ENCODE measurements at regions of chr19 and their contacts with region 1.

Region 1: DNA sequence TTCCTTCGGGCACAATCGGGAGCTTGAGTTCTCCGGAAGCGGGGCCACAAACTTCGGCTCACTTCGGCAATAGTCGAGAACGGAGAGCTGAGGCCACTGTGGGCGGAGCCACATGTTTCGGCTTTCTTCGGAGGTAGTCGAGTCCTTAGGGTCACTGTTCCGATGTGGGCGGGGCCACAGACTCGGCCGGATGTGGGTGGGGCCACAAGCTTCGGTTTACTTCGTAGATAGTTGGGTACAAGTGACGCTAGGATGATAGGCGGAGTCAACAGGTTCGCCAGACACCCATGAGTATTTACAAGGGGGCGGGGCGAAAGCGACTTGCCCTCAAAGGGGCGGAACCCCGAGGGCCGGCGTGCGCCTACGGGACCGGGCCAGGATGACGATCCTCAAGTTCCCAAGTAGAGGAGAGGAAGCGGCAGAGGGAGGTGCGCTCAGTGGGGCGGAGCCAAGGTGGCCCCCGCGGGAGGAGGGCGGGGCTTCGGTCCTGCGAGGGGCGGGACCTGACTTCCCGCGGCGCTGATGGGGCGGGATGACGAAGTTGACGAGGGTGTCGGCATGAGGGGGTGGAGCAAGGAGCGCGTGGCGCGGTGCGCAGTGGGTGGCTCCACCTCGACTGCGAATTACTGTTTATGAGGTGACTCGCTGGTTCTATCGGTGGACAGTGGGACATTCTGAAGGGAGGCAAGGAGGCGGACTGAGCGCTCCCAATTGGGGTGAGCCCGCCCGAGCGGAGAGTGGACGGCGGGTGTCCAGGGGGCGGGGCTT is 539 bp upstream of the MBOAT7 start:
- DNase-seq: peak; percentile 100
- ATAC-seq: peak; percentile 51
- H3K4me3 ChIP-seq: peak overlapping the region; percentile 31 to 87 (median 81)
- H3K4me3 Mint-ChIP-seq: peak overlapping the region; percentile 94
- H3K27ac ChIP-seq: peak overlapping the region; percentile 96 to 99
- H3K27ac Mint-ChIP-seq: peak overlapping the region; percentile 99
- H3K4me1 ChIP-seq: peaks cover 18 to 22% of the 10 kb centered on the region in 2 donors
- H3K4me1 Mint-ChIP-seq: peaks cover 32% of the 10 kb centered on the region
- H3K27me3 ChIP-seq: no peaks in the 10 kb centered on the region
- H3K27me3 Mint-ChIP-seq: no peaks in the 10 kb centered on the region
- CTCF ChIP-seq: no peak

Region 2: GRCh38 chr19:54102421-54103169 is 87.3 kb before region 1 on chr19 and contains the start of gene NDUFA3:
- CTCF ChIA-PET with region 1: no interaction called
- POLR2A ChIA-PET with region 1: no interaction called
- intact Hi-C with region 1: loop called (anchors 1 kb)
- DNase-seq: peak; percentile 99
- ATAC-seq: peak; percentile 99
- H3K4me3 ChIP-seq: peak within 1 kb of the TSS; percentile 59 to 90 (median 76)
- H3K4me3 Mint-ChIP-seq: peak within 1 kb of the TSS; percentile 100
- H3K27ac ChIP-seq: peak within 1 kb of the TSS; percentile 59 to 74
- H3K27ac Mint-ChIP-seq: peak within 1 kb of the TSS; percentile 89
- H3K4me1 ChIP-seq: peaks cover 6 to 13% of the 10 kb centered on the region in 2 donors
- H3K4me1 Mint-ChIP-seq: peaks cover 20% of the 10 kb centered on the region
- H3K27me3 ChIP-seq: no peaks in the 10 kb centered on the region
- H3K27me3 Mint-ChIP-seq: no peaks in the 10 kb centered on the region
- CTCF ChIP-seq: no peak
- total RNA-seq, gene NDUFA3: 91.8 and 94.4 TPM in 2 replicates

Region 3: DNA sequence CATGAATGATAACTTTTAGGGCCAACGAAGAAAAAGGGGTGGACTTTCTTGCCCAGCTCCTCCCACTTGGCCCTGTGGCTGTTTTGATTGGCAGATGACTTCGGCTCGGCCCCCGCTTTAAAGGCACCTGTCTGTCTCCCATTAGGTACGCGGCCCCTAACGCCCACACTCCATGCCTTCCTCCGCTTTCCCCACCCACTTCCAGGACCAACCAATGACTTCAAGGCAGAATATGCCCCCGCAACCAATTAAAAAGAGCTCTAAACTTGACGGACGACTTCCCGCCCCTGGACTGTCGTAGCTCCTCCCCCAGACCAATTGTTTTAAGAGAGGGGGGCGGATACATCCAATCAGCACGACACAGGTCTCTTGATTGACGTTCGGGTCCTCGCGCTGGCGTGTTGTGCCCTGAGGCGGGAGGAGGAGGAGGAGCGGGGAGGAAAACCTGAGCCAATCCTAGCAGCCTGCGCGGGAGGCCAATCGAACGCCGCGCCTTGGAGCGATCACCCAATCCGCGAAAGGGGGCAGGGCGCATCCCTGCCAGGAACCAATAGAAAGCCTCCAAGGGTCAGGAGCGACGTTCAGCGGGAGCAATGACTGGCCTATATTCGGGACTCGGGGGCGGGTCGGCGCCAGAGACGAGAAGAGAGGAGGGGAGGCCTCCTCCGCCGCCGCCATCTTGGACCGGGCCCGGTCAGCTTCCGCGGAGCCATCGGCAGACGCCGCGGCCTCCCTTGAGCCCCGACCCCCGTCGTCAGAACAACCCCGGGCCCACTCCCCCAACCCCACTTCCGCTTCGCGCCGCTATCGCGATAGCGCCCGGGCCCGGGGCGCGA is 52.6 kb before region 1 on chr19 and contains the start of gene CNOT3:
- CTCF ChIA-PET with region 1: no interaction called
- POLR2A ChIA-PET with region 1: interaction called, 23 read pairs
- intact Hi-C with region 1: loop called (anchors 1 kb)
- DNase-seq: peak; percentile 100
- ATAC-seq: peak; percentile 77
- H3K4me3 ChIP-seq: peak within 1 kb of the TSS; percentile 28 to 94 (median 79)
- H3K4me3 Mint-ChIP-seq: peak within 1 kb of the TSS; percentile 89
- H3K27ac ChIP-seq: peak within 1 kb of the TSS; percentile 74 to 96
- H3K27ac Mint-ChIP-seq: peak within 1 kb of the TSS; percentile 90
- H3K4me1 ChIP-seq: peaks cover 24 to 32% of the 10 kb centered on the region in 2 donors
- H3K4me1 Mint-ChIP-seq: peaks cover 49% of the 10 kb centered on the region
- H3K27me3 ChIP-seq: peaks cover 0 to 13% (median 2%) of the 10 kb centered on the region in 4 experiments
- H3K27me3 Mint-ChIP-seq: peaks cover 4% of the 10 kb centered on the region
- CTCF ChIP-seq: no peak
- total RNA-seq, gene CNOT3: 71.0 and 82.1 TPM in 2 replicates

Region 4: DNA sequence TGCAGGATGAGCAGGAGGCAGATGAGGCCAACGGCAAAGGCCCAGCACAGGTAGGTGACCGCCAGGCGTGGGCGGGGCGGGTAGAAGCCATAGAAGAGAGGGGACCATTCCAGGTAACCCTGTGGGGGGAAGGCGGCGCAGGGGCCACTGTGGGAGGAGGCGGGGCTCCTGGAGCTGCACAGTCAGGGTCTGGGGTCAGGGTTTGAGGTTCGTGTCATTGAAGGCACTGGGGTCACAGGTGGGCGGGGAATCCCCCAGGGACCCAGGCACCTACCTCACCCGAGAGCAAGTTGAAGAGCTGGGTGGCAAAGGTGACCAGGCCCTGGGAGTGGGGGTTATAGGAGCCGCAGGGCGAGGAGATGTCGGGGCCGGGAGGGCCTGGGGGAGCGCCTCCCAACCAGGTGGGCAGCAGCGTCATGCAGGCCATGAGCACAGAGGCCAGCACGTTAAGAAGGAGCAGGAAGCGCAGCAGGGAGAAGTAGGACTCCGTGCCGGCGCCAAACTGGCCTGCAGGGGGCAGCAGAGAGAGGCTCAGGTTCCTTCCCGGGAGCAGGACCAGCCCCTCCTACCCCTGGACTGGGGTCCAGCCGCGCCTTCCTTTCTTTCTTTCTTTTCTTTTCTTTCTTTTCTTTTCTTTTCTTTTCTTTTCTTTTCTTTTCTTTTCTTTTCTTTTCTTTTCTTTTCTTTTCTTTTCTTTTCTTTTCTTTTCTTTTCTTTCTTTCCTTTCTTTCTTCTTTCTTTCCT is 21.6 kb before region 1 on chr19:
- CTCF ChIA-PET with region 1: interaction called, 50 read pairs
- POLR2A ChIA-PET with region 1: interaction called, 8 read pairs
- intact Hi-C with region 1: loop called (anchors 1 kb)
- DNase-seq: peak; percentile 89
- ATAC-seq: peak; percentile 89
- H3K4me3 ChIP-seq: no peak overlapping the region
- H3K4me3 Mint-ChIP-seq: no peak overlapping the region
- H3K27ac ChIP-seq: no peak overlapping the region
- H3K27ac Mint-ChIP-seq: no peak overlapping the region
- H3K4me1 ChIP-seq: peaks cover 18 to 22% of the 10 kb centered on the region in 2 donors
- H3K4me1 Mint-ChIP-seq: peaks cover 24% of the 10 kb centered on the region
- H3K27me3 ChIP-seq: peaks cover 0 to 23% (median 13%) of the 10 kb centered on the region in 4 experiments
- H3K27me3 Mint-ChIP-seq: peaks cover 16% of the 10 kb centered on the region
- CTCF ChIP-seq: peak; percentile 89

Region 5: GRCh38 chr19:54231077-54231931 is 41.4 kb after region 1 on chr19:
- CTCF ChIA-PET with region 1: interaction called, 5 read pairs
- POLR2A ChIA-PET with region 1: no interaction called
- intact Hi-C with region 1: loop called (anchors 5 kb)
- DNase-seq: peak; percentile 88
- ATAC-seq: peak; percentile 87
- H3K4me3 ChIP-seq: no peak overlapping the region
- H3K4me3 Mint-ChIP-seq: no peak overlapping the region
- H3K27ac ChIP-seq: no peak overlapping the region
- H3K27ac Mint-ChIP-seq: no peak overlapping the region
- H3K4me1 ChIP-seq: peaks cover 4 to 7% of the 10 kb centered on the region in 2 donors
- H3K4me1 Mint-ChIP-seq: peaks cover 3% of the 10 kb centered on the region
- H3K27me3 ChIP-seq: peaks cover 0 to 64% (median 16%) of the 10 kb centered on the region in 4 experiments
- H3K27me3 Mint-ChIP-seq: peaks cover 40% of the 10 kb centered on the region
- CTCF ChIP-seq: peak; percentile 91

Region 6: DNA sequence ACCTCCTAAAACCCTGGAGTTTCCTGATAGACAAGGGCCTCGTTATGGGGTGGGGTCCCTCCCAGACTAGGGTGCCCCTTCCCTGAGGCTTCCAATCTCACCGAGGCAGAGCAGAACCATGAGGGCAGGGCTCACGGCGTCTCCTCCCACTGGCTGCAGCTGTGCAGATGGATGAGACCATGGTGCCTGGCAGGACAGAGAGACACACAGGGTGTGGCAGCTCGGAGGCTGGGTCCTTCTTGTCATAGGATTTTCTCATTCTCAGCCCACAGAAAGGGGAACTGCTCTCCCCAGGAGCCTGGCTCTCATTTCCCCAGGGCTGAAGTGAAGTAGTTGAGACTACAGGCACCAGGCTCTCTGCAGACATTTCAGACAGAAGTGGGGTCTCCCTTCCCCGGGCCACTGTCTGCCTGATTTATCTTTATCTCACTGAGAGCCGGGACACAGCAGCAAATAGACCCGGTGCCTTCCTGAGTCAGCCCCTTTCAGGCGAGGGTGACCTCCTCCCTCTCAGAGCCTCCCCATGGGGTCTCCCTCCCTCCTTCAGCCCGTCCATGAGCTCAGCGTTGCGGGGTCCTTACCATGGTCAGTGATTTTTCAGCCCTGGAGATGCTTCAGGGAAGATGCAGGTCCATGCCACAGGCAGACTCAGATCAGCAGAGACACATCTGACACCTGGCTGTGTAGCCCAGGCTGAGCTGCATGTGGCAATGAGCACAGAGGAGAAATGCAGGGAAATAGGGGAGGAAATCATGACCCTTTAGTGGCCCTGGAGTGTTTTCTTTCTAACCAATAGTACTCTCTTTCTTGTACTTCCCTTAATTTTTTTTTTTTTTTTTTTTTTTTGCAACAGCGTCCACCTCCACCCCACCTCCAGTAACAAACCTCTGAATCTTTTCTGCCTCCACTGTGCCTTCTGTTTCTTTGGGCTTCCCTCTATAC is 122.8 kb after region 1 on chr19 and contains the start of gene LILRA5:
- CTCF ChIA-PET with region 1: no interaction called
- POLR2A ChIA-PET with region 1: no interaction called
- intact Hi-C with region 1: no loop called
- DNase-seq: peak; percentile 63
- ATAC-seq: peak; percentile 73
- H3K4me3 ChIP-seq: peak within 1 kb of the TSS in 1 of 5 experiments; percentile 55
- H3K4me3 Mint-ChIP-seq: no peak within 1 kb of the TSS
- H3K27ac ChIP-seq: no peak within 1 kb of the TSS
- H3K27ac Mint-ChIP-seq: peak within 1 kb of the TSS; percentile 32
- H3K4me1 ChIP-seq: peaks cover 14 to 16% of the 10 kb centered on the region in 2 donors
- H3K4me1 Mint-ChIP-seq: peaks cover 15% of the 10 kb centered on the region
- H3K27me3 ChIP-seq: peaks cover 0 to 44% (median 26%) of the 10 kb centered on the region in 4 experiments
- H3K27me3 Mint-ChIP-seq: peaks cover 39% of the 10 kb centered on the region
- CTCF ChIP-seq: no peak
- total RNA-seq, gene LILRA5: 0.46 TPM in 1 of 2 replicates, not detected in the other